Prostate gland (tissue), 2 donors: ENCODE measurements at regions of chr11 and their contacts with region 1.

Region 1: DNA sequence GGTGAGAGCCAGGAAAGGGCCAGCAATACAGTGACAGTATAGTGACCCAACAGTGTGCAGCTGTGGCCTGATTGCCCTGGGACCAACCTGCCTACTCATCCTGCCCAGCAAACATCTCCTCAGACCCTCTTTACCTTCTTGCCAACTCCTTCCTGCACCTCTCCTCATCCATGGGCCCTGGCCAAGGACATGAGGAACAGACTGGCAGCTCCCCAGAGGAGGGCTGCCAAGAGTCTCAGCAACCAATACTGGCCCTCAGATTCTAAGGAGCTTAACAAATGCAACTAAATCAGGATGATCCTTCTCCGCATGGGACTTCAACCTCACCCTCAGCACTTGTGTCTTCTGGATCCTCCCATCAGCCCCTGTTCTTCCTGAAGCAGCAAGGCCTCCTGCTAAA is 77.0 kb downstream of the RPL27A start:
- DNase-seq: peak; percentile 32
- H3K4me3 ChIP-seq: no peak overlapping the region
- H3K27ac ChIP-seq: peak overlapping the region; percentile 13 to 53
- H3K4me1 ChIP-seq: peaks cover 4% of the 10 kb centered on the region
- H3K27me3 ChIP-seq: no peaks in the 10 kb centered on the region
- CTCF ChIP-seq: no peak
- POLR2A ChIP-seq: no peak

Region 2: GRCh38 chr11:8080674-8081590 is 678.7 kb before region 1 on chr11 and contains the start of gene TUB:
- intact Hi-C with region 1: no loop called
- DNase-seq: no peak
- H3K4me3 ChIP-seq: peak within 1 kb of the TSS; percentile 50 to 51
- H3K27ac ChIP-seq: peak within 1 kb of the TSS; percentile 24 to 27
- H3K4me1 ChIP-seq: no peaks in the 10 kb centered on the region
- H3K27me3 ChIP-seq: no peaks in the 10 kb centered on the region
- CTCF ChIP-seq: no peak
- POLR2A ChIP-seq: no peak
- total RNA-seq, gene TUB: 9.2 to 14.5 TPM

Region 3: DNA sequence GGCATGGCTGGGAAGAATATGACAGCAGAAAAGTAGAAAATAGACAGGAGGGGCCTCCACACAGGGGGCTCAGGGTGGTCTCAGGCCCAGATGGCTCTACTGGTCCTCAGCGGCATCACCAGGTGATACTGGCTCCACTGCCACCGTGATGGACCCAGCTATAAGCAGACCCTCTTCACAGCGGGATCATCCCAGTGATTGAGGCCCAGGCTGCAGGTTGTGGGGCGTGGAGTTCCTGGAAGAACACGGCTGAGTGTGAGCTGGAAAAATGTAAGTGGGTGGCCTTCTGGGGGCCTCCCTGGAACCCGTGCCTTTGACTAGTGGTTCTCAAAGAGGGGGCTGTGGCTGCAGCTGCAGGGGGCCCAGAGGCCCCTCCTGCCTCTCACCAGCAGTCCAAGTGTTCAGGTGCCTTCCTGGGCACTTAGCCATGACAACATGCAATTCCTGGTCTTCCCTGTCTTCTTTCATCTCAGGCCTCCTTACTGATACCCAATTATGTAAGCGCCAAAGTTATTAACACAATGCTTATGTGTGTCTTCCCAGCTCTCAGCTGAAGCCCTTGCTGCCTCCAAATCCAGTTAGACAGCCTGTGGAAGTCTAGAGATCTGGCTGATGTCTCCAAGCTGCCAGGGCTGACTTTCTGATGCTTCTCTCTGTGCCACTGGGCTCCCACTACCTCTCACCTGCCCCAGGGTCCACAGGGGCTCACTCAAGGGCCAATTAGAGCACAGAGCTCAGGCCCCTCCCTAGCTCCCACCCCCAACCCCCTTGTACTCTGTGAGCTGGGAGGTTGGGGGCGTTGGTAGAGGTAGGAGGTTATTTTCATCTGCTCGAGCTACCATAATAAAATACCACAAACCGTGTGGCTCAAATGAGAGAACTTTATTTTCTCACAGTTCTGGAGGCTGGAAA is 385.9 kb before region 1 on chr11:
- intact Hi-C with region 1: no loop called
- DNase-seq: no peak
- H3K4me3 ChIP-seq: no peak overlapping the region
- H3K27ac ChIP-seq: no peak overlapping the region
- H3K4me1 ChIP-seq: no peaks in the 10 kb centered on the region
- H3K27me3 ChIP-seq: no peaks in the 10 kb centered on the region
- CTCF ChIP-seq: no peak
- POLR2A ChIP-seq: no peak

Region 4: GRCh38 chr11:8717876-8718753 is 41.5 kb before region 1 on chr11:
- intact Hi-C with region 1: loop called (anchors 5 kb)
- DNase-seq: peak; percentile 78
- H3K4me3 ChIP-seq: no peak overlapping the region
- H3K27ac ChIP-seq: peak overlapping the region; percentile 80 to 81
- H3K4me1 ChIP-seq: peaks cover 46% of the 10 kb centered on the region
- H3K27me3 ChIP-seq: no peaks in the 10 kb centered on the region
- CTCF ChIP-seq: no peak
- POLR2A ChIP-seq: no peak

Region 5: DNA sequence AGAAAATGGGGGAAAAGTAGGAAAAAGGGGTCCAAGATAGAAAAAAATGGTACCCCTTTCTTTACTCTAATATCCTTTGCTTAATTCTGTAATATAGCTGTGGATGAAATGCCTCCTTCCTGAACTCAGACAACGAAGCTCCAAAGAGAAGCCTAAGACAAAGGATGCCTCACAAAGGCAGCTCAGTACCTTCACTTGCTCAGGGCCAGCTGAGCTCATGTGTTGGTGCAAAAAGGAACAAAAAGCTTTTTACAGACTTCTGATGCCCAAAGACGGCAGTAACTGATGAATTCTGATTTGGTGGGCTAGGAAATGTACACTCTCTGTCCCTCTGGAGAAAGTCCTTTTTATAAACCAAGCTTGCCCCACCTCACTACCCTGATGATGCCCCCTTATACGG is 428.0 kb after region 1 on chr11:
- intact Hi-C with region 1: no loop called
- DNase-seq: no peak
- H3K4me3 ChIP-seq: no peak overlapping the region
- H3K27ac ChIP-seq: no peak overlapping the region
- H3K4me1 ChIP-seq: no peaks in the 10 kb centered on the region
- H3K27me3 ChIP-seq: no peaks in the 10 kb centered on the region
- CTCF ChIP-seq: no peak
- POLR2A ChIP-seq: no peak